ENCODE measurements at regions of chr10 and their contacts with region 1.

Region 1: GRCh38 chr10:73956476-73957359 is 41.2 kb upstream of the VCL start:
- DNase-seq: peak; percentile 66
- ATAC-seq: peak; percentile 72
- H3K4me3 ChIP-seq: peak overlapping the region; percentile 55
- H3K27ac ChIP-seq: peak overlapping the region; percentile 80
- H3K4me1 ChIP-seq: peaks cover 54% of the 10 kb centered on the region
- H3K27me3 ChIP-seq: no peaks in the 10 kb centered on the region
- CTCF ChIP-seq: no peak
- EP300 ChIP-seq: peak; percentile 56 to 79
- POLR2A ChIP-seq: no peak
- RAD21 ChIP-seq: no peak

Region 2: DNA sequence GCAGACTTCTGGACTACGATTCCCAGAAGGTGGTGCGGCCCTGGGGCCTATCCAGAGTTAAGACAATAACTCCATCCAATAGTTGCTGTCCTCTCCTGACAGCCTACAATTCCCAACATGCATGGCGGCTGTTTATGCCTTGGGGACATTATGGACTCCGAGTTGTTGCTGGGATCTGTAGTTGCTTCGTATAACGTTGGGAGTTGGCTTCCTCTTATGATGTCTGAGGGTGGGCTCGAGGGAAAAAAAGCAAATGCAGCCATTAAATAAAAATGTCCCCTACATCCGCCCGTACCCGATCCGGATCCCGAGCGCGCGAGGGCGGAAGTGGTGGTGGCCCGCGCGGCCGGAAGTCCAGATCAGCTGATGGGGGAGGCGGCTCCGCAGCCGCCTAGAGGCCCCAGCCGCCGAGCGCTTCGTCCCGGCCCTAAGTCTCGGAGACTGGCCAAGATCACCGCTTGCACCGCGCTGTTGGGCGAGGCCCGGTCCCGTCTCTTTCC is 171.4 kb before region 1 on chr10 and contains the start of gene ZSWIM8:
- CTCF ChIA-PET with region 1: no interaction called
- POLR2A ChIA-PET with region 1: no interaction called
- RAD21 ChIA-PET with region 1: no interaction called
- SMC1A ChIA-PET with region 1: no interaction called
- in situ Hi-C with region 1: no loop called
- intact Hi-C with region 1: no loop called
- DNase-seq: peak; percentile 84
- ATAC-seq: peak; percentile 89
- H3K4me3 ChIP-seq: peak within 1 kb of the TSS; percentile 91
- H3K27ac ChIP-seq: peak within 1 kb of the TSS; percentile 85
- H3K4me1 ChIP-seq: peaks cover 10% of the 10 kb centered on the region
- H3K27me3 ChIP-seq: no peaks in the 10 kb centered on the region
- CTCF ChIP-seq: no peak
- EP300 ChIP-seq: no peak
- POLR2A ChIP-seq: peak; percentile 86
- RAD21 ChIP-seq: no peak
- polyA plus RNA-seq, gene ZSWIM8: 7.8 to 8.5 TPM

Region 3: DNA sequence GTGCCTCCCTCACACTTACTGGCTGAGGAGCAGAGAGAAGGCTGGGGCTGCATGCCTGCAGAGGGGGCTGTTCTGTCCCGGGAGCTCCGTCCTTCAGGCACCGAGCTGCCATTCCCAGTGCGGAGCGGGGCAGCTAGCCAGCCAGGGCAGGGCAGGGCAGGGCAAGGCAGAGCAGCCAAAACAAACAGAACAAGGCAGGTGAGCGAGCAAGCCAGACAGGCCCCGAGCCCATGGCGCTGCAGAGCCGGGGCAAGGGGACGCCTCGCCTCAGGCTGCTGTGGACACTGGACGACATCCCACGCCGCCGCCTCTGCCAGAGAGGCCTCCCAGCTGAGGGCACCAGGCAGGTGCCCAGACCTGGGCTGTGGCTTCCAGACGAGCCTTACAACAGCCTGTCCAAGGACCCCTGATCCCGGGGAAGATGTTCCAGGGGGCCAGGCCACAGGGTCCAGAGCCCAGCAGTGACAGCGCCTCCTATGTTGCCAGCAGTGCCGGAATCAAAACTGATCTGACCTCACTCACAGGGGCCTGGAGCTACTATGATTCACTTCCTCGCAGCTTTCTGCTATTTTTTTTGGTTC is 137.1 kb before region 1 on chr10:
- CTCF ChIA-PET with region 1: no interaction called
- POLR2A ChIA-PET with region 1: no interaction called
- RAD21 ChIA-PET with region 1: no interaction called
- SMC1A ChIA-PET with region 1: no interaction called
- in situ Hi-C with region 1: no loop called
- intact Hi-C with region 1: no loop called
- DNase-seq: no peak
- ATAC-seq: no peak
- H3K4me3 ChIP-seq: no peak overlapping the region
- H3K27ac ChIP-seq: no peak overlapping the region
- H3K4me1 ChIP-seq: no peaks in the 10 kb centered on the region
- H3K27me3 ChIP-seq: no peaks in the 10 kb centered on the region
- CTCF ChIP-seq: no peak
- EP300 ChIP-seq: no peak
- POLR2A ChIP-seq: no peak
- RAD21 ChIP-seq: no peak

Region 4: GRCh38 chr10:73991884-73992245 is 35.1 kb after region 1 on chr10:
- CTCF ChIA-PET with region 1: interaction called, 9 read pairs
- POLR2A ChIA-PET with region 1: interaction called, 10 read pairs
- RAD21 ChIA-PET with region 1: interaction called, 3 read pairs
- SMC1A ChIA-PET with region 1: interaction called, 9 read pairs
- in situ Hi-C with region 1: no loop called
- intact Hi-C with region 1: loop called (anchors 5 kb)
- DNase-seq: no peak
- ATAC-seq: peak; percentile 96
- H3K4me3 ChIP-seq: no peak overlapping the region
- H3K27ac ChIP-seq: no peak overlapping the region
- H3K4me1 ChIP-seq: peaks cover 13% of the 10 kb centered on the region
- H3K27me3 ChIP-seq: no peaks in the 10 kb centered on the region
- CTCF ChIP-seq: no peak
- EP300 ChIP-seq: no peak
- POLR2A ChIP-seq: no peak
- RAD21 ChIP-seq: no peak

Region 5: GRCh38 chr10:74035303-74035702 is 78.6 kb after region 1 on chr10:
- CTCF ChIA-PET with region 1: interaction called, 24 read pairs
- POLR2A ChIA-PET with region 1: interaction called, 3 read pairs
- RAD21 ChIA-PET with region 1: no interaction called
- SMC1A ChIA-PET with region 1: interaction called, 4 read pairs
- in situ Hi-C with region 1: no loop called
- intact Hi-C with region 1: loop called (anchors 2 kb)
- DNase-seq: no peak
- ATAC-seq: no peak
- H3K4me3 ChIP-seq: no peak overlapping the region
- H3K27ac ChIP-seq: no peak overlapping the region
- H3K4me1 ChIP-seq: peaks cover 11% of the 10 kb centered on the region
- H3K27me3 ChIP-seq: no peaks in the 10 kb centered on the region
- CTCF ChIP-seq: peak in 1 of 3 experiments; percentile 14; a peak in 2 of 6 replicates
- EP300 ChIP-seq: no peak
- POLR2A ChIP-seq: no peak
- RAD21 ChIP-seq: peak; percentile 46; the same call in 1 of the 2 replicates

Region 6: DNA sequence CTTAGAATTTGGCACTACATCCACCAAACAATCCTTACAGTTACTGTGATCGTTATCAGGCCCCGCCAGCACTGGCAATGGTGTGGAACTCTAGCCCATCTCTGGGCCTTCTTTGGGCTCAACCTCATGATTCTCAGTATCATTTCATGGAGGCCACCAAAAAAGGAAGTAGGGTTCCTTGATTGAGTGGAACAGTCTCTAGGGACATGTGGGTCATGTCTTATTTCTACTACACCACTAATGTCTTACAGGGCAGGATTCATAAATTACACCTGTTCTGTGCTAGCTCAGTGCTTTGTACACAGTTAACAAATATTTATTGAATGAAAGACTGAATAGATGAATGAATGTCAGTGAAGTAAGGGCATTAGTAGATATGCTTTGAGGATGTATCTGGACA is 140.1 kb after region 1 on chr10:
- CTCF ChIA-PET with region 1: interaction called, 5 read pairs
- POLR2A ChIA-PET with region 1: interaction called, 4 read pairs
- RAD21 ChIA-PET with region 1: interaction called, 6 read pairs
- SMC1A ChIA-PET with region 1: no interaction called
- in situ Hi-C with region 1: no loop called
- intact Hi-C with region 1: loop called (anchors 5 kb)
- DNase-seq: peak; percentile 69
- ATAC-seq: peak; percentile 99
- H3K4me3 ChIP-seq: no peak overlapping the region
- H3K27ac ChIP-seq: peak overlapping the region; percentile 30; the same call in 1 of the 2 replicates
- H3K4me1 ChIP-seq: peaks cover 8% of the 10 kb centered on the region
- H3K27me3 ChIP-seq: no peaks in the 10 kb centered on the region
- CTCF ChIP-seq: no peak
- EP300 ChIP-seq: 0 out of 4 replicates have a peak, but pooled peaks of 1 of the 2 experiments have one; percentile 59
- POLR2A ChIP-seq: no peak
- RAD21 ChIP-seq: no peak